ENCODE measurements at regions of chr5 and their contacts with region 1.

Region 1: GRCh38 chr5:66945389-66946349 is 250.9 kb downstream of the CD180 start:
- DNase-seq: no peak
- ATAC-seq: no peak
- H3K4me3 ChIP-seq: no peak overlapping the region
- H3K27ac ChIP-seq: no peak overlapping the region
- H3K4me1 ChIP-seq: no peaks in the 10 kb centered on the region
- H3K27me3 ChIP-seq: no peaks in the 10 kb centered on the region
- CTCF ChIP-seq: no peak

Region 2: GRCh38 chr5:66881480-66882156 is 64.1 kb before region 1 on chr5:
- intact Hi-C with region 1: loop called in 1 of 2 experiments (anchors 2 kb)
- DNase-seq: no peak
- ATAC-seq: no peak
- H3K4me3 ChIP-seq: no peak overlapping the region
- H3K27ac ChIP-seq: no peak overlapping the region
- H3K4me1 ChIP-seq: no peaks in the 10 kb centered on the region
- H3K27me3 ChIP-seq: no peaks in the 10 kb centered on the region
- CTCF ChIP-seq: no peak